HEK293 (cell line): ENCODE measurements at regions of chr14 and their contacts with region 1.

Region 1: GRCh38 chr14:22986508-22987054 is 4.2 kb upstream of the AJUBA start:
- H3K4me3 ChIP-seq: no peak overlapping the region
- H3K27ac ChIP-seq: no peak overlapping the region
- H3K4me1 ChIP-seq: peaks cover 4% of the 10 kb centered on the region
- CTCF ChIP-seq: peak; percentile 77; the same call in 1 of the 2 replicates

Region 2: DNA sequence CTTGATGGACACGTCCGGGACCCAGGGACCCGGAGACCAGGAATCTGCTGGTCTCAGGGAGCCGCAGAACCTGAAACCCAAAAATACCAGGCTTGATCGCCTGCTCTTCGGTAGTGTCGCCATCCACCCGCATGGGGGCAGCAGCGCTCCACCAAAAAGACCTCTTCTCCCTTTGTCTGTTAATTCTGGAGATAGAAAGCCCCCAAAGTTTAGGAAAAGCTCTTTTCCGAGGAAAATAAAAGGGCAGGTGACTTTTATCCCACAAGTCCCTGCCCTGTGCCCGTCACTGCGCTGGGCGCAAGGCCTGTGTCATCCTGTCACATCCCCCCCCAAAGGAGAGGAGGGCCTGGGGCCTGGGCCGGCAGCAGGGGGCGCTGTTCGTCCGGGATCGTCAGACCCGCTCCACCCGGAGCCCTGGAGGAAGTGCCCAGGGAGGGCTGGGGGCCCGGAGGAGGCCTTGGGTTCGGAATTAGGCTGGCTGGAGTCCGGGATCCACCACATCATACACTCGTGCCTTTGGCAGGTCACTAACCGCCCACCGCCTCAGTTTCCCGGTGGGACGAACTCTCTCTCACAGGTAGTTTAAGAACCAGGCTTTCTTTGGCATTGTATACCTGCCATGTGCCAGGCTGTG is 429.5 kb before region 1 on chr14:
- CTCF ChIA-PET with region 1: interaction called, 11 read pairs
- POLR2A ChIA-PET with region 1: interaction called, 4 read pairs
- H3K4me3 ChIP-seq: peak overlapping the region; percentile 39
- H3K27ac ChIP-seq: peak overlapping the region; percentile 28; the same call in 1 of the 2 replicates
- H3K4me1 ChIP-seq: peaks cover 3% of the 10 kb centered on the region; the same call in 1 of the 2 replicates
- CTCF ChIP-seq: peak; percentile 95

Region 3: DNA sequence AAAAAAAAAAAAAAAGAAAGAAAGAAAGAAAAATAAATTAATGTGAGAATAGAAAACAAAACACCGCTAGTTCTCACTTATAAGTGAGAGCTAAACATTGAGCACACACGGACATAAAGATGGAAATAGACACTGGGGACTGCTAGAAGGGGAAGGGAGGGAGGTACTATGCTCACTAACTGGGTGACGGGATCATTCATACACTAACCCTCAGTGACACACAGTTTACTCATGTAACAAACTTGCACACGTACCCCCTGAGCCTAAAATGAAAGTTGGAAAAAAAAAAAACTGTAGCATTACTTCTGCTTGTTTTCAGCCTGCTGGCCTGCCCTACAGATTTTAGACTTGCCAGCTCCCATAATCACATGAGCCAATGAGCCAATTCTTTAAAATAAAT is 46.9 kb before region 1 on chr14:
- CTCF ChIA-PET with region 1: interaction called, 14 read pairs
- POLR2A ChIA-PET with region 1: no interaction called
- H3K4me3 ChIP-seq: no peak overlapping the region
- H3K27ac ChIP-seq: no peak overlapping the region
- H3K4me1 ChIP-seq: no peaks in the 10 kb centered on the region
- CTCF ChIP-seq: no peak

Region 4: GRCh38 chr14:22973217-22974032 is 13.2 kb before region 1 on chr14:
- CTCF ChIA-PET with region 1: interaction called, 227 read pairs
- POLR2A ChIA-PET with region 1: interaction called, 31 read pairs
- H3K4me3 ChIP-seq: no peak overlapping the region
- H3K27ac ChIP-seq: no peak overlapping the region
- H3K4me1 ChIP-seq: peaks cover 20% of the 10 kb centered on the region
- CTCF ChIP-seq: peak; percentile 63

Region 5: GRCh38 chr14:23013054-23013748 is 26.6 kb after region 1 on chr14:
- CTCF ChIA-PET with region 1: interaction called, 53 read pairs
- POLR2A ChIA-PET with region 1: interaction called, 5 read pairs
- H3K4me3 ChIP-seq: no peak overlapping the region
- H3K27ac ChIP-seq: no peak overlapping the region
- H3K4me1 ChIP-seq: peaks cover 5% of the 10 kb centered on the region; the same call in 1 of the 2 replicates
- CTCF ChIP-seq: no peak

Region 6: DNA sequence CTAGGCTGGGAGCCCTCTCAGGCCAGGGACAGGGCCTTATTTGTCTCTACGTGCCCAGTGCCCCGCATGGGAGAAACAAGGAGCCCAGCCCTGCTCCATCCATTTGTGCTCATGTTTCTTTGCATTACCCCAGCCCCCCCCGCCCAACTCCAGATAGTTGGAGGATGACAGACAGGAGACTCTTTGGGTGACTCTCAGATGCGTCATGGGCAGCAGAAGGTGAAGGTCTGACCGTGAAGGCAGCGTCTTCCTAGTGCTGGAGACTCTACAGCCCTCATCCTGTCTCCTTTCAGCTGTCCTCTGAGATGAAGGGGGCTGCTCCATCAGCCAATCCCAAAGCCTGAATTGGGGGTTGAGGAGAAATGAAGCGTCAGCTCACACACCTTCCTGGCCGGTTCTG is 55.1 kb after region 1 on chr14:
- CTCF ChIA-PET with region 1: interaction called, 12 read pairs
- POLR2A ChIA-PET with region 1: no interaction called
- H3K4me3 ChIP-seq: no peak overlapping the region
- H3K27ac ChIP-seq: no peak overlapping the region
- H3K4me1 ChIP-seq: no peaks in the 10 kb centered on the region
- CTCF ChIP-seq: no peak

Region 7: DNA sequence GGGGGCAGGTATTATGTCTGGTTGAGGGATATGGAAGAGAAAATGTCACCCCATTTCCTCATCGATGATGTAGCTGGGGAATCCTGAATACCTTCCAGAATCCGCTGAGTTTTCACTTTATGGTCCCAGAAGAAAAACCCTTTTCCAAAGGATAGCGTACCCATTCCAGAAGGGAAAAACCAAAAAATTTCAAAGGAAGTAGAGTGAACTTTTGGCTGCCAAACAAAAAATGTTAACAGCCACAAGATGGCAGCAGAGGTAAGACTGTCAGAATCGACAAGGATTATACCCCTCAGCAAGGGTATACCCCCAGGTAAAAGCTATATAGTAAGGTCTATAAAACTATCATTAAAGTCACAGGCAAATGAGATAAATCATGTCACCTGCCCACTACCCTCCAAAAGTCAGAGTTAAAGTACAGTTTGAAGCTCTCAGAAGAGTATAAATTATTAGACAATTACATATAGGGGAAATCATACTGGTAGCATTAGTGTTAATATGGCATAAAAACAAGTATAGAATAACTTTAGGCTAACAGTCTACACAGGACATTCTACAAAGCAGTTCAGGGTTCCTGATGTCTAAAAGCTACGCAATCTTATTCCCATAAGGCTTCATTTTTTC is 90.3 kb after region 1 on chr14:
- CTCF ChIA-PET with region 1: interaction called, 24 read pairs
- POLR2A ChIA-PET with region 1: interaction called, 12 read pairs
- H3K4me3 ChIP-seq: no peak overlapping the region
- H3K27ac ChIP-seq: no peak overlapping the region
- H3K4me1 ChIP-seq: peaks cover 6% of the 10 kb centered on the region; the same call in 1 of the 2 replicates
- CTCF ChIP-seq: no peak

Region 8: DNA sequence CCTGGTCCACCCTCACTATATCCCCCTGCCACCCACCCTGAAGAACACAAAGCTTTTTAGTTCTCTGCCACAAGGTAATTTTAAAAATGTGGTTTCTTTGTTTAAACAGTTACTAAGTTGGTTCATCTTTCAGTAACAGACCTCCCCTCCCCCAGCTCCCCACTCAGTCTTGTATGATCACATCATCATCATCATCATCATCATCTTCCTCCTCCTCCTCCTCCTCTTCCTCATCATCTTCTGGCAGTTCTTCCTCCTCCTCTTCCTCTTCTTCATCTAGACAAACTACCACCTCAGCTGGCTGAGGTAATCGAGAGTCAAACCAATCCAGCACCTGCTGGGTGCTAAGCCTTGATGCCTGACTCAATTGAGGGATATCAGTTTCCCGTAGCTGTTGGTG is 288.8 kb after region 1 on chr14:
- CTCF ChIA-PET with region 1: no interaction called
- POLR2A ChIA-PET with region 1: no interaction called
- H3K4me3 ChIP-seq: no peak overlapping the region
- H3K27ac ChIP-seq: no peak overlapping the region
- H3K4me1 ChIP-seq: 0 out of 2 replicates have a peak, but pooled peaks cover 3% of the 10 kb centered on the region
- CTCF ChIP-seq: no peak